Activated CD4-positive, alpha-beta memory T cell treated with anti-CD3 and anti-CD28 coated beads for 36 hours (primary cell): ENCODE measurements at regions of chr10 and their contacts with region 1.

Region 1: DNA sequence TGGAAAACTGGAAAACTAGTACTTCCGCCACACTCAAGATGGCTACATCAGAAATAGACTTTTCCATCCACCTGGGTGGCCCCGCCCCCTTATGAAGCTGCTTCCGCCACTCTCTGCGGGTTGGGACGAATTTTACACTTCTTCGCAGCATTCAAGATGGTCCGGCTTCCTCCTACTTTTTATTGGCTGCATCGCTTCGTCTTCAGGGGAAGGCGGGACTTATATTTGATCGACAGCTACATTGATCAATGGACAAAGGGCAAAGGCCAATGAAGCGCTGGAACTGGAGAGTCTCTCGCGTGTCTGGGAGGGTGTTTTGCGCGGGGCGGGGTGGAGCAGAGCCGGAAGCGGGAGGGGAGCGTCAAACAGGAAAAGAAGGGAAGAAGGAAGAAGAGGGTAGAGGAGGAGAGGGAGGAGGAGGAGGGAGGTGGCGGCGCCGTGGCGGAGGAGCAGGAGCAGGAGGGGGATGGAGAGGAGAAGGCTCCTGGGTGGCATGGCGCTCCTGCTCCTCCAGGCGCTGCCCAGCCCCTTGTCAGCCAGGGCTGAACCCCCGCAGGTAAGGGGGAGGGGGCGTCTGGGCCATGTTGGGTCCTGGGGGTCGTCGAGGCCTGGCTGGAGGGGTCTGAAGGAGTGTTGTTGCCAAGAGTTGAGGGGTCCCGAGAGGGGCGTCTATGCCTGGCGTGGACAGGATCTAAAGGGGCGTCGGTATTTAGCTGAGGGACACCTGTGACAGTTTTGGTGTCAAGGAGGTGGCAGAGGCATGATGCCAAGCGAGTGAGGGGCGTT is at the start of gene WBP1L:
- DNase-seq: peak; percentile 97
- H3K4me3 Mint-ChIP-seq: peak within 1 kb of the TSS; percentile 98
- H3K27ac Mint-ChIP-seq: peak within 1 kb of the TSS; percentile 67
- H3K4me1 Mint-ChIP-seq: peaks cover 41% of the 10 kb centered on the region
- H3K27me3 Mint-ChIP-seq: no peaks in the 10 kb centered on the region
- total RNA-seq, gene WBP1L: 14.6 to 15.9 TPM

Region 2: DNA sequence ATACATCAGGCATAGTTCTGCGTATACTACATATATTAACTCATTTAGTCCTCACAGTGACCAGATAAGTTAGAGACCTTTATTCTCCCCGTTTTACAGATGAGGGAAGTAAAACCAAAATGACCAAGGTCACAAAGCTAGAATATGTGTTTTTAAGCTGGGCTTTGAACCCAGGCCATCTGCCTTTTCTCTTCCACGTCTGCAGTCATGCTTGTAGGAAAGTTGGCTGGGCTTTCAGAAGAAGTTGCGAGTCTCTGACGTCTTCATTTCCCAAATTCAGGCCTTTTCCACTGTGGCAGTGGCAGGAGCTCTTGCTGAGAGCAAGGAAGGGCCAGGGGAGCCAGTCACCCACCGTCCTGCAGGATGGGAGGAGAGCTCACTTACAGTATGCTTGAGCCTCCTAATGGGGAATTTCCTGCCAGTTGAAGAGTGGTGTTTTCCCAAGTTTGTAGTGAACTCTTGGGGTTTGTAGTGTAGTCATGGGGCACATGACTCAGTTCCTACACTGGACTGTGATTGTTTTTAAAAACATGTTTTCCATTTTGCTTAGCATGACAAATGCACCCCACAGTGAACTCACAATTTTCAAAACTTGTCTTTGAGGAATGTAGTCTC is 59.2 kb after region 1 on chr10:
- CTCF ChIA-PET with region 1: interaction called, 3 read pairs
- POLR2A ChIA-PET with region 1: no interaction called
- intact Hi-C with region 1: loop called (anchors 1 kb)
- DNase-seq: peak; percentile 48
- H3K4me3 Mint-ChIP-seq: no peak overlapping the region
- H3K27ac Mint-ChIP-seq: peak overlapping the region; percentile 91
- H3K4me1 Mint-ChIP-seq: peaks cover 32% of the 10 kb centered on the region
- H3K27me3 Mint-ChIP-seq: no peaks in the 10 kb centered on the region

Region 3: DNA sequence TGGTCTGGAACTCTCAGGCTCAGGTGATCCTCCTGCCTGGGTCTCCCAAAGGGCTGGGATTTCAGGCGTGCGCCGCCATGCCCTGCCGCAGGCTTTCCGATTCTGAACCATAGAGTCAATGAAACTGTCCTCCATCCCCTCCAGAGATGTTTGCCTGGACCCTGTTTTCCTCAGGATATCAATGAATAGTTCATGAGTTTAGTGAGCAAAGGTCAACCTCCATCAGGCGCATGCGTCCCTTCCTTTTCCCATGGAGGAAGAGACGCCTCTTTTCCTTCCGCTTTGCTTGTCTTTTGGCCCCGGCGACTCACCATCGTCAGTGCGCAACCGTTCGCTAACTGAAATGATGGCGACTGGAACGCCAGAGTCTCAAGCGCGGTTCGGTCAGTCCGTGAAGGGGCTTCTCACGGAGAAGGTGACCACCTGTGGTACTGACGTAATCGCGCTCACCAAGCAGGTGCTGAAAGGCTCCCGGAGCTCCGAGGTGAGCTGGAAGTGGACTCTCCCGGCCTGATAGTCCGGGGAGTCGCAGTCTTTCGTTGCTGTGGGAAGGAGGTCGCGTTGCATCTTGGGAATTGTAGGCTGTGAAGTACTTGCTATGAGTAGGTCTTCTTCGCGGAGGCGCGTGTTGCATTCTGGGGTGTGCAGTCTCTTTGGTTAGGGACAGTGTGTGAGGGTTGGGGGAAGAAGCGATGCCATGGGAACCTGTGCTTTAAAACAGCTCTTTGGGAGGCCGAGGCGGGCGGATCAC is 110.3 kb after region 1 on chr10 and contains the start of gene BORCS7:
- CTCF ChIA-PET with region 1: no interaction called
- POLR2A ChIA-PET with region 1: no interaction called
- intact Hi-C with region 1: loop called (anchors 1 kb)
- DNase-seq: peak; percentile 93
- H3K4me3 Mint-ChIP-seq: peak within 1 kb of the TSS; percentile 96
- H3K27ac Mint-ChIP-seq: peak within 1 kb of the TSS; percentile 94
- H3K4me1 Mint-ChIP-seq: peaks cover 14% of the 10 kb centered on the region
- H3K27me3 Mint-ChIP-seq: no peaks in the 10 kb centered on the region
- total RNA-seq, gene BORCS7: 5.0 to 5.9 TPM